CD8-positive, alpha-beta T cell (primary cell): ENCODE measurements at regions of chr4 and their contacts with region 1.

Region 1: DNA sequence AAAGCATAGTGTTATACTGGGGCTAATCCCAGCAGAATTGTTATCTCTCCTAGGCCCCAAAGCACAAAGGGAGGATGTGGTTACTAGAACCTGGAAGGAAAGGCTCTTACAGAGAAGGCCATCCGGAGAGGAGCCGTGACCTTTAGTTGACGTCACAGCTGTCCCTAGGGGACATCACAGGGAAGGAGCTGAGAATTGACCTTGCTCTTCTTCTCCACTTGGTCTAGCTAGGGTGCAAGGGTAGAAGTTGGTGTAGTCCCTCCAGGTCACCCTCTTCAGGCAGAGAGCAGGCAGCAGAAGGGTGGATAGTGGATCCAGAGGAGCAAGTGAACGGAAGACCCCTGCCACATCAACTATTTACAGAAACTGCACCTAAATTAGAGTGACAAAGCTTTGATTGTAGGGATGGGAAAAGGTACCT is 22.8 kb upstream of the FGF2 start:
- DNase-seq: no peak
- ATAC-seq: no peak
- H3K4me3 ChIP-seq: no peak overlapping the region
- H3K4me3 Mint-ChIP-seq: no peak overlapping the region
- H3K27ac ChIP-seq: no peak overlapping the region
- H3K27ac Mint-ChIP-seq: no peak overlapping the region
- H3K4me1 ChIP-seq: no peaks in the 10 kb centered on the region
- H3K4me1 Mint-ChIP-seq: no peaks in the 10 kb centered on the region
- H3K27me3 ChIP-seq: no peaks in the 10 kb centered on the region
- H3K27me3 Mint-ChIP-seq: peaks cover 2% of the 10 kb centered on the region
- CTCF ChIP-seq: no peak

Region 2: GRCh38 chr4:122771724-122772123 is 32.1 kb before region 1 on chr4:
- CTCF ChIA-PET with region 1: no interaction called
- POLR2A ChIA-PET with region 1: no interaction called
- intact Hi-C with region 1: loop called in 1 of 2 experiments (anchors 1 kb)
- DNase-seq: no peak
- ATAC-seq: no peak
- H3K4me3 ChIP-seq: no peak overlapping the region
- H3K4me3 Mint-ChIP-seq: no peak overlapping the region
- H3K27ac ChIP-seq: no peak overlapping the region
- H3K27ac Mint-ChIP-seq: no peak overlapping the region
- H3K4me1 ChIP-seq: no peaks in the 10 kb centered on the region
- H3K4me1 Mint-ChIP-seq: no peaks in the 10 kb centered on the region
- H3K27me3 ChIP-seq: no peaks in the 10 kb centered on the region
- H3K27me3 Mint-ChIP-seq: peaks cover 2% of the 10 kb centered on the region
- CTCF ChIP-seq: no peak

Region 3: GRCh38 chr4:122827879-122828601 is 24.2 kb after region 1 on chr4:
- CTCF ChIA-PET with region 1: no interaction called
- POLR2A ChIA-PET with region 1: no interaction called
- intact Hi-C with region 1: no loop called
- DNase-seq: peak in 5 of 9 experiments; percentile 14 to 64 (median 41)
- ATAC-seq: peak; percentile 68
- H3K4me3 ChIP-seq: peak overlapping the region; percentile 47 to 61
- H3K4me3 Mint-ChIP-seq: peak overlapping the region; percentile 84
- H3K27ac ChIP-seq: no peak overlapping the region
- H3K27ac Mint-ChIP-seq: no peak overlapping the region
- H3K4me1 ChIP-seq: peaks cover 10% of the 10 kb centered on the region
- H3K4me1 Mint-ChIP-seq: peaks cover 13% of the 10 kb centered on the region
- H3K27me3 ChIP-seq: peaks cover 21 to 30% of the 10 kb centered on the region in 2 experiments
- H3K27me3 Mint-ChIP-seq: peaks cover 72% of the 10 kb centered on the region
- CTCF ChIP-seq: no peak